BJ (cell line): ENCODE measurements at regions of chr15 and their contacts with region 1.

Region 1: DNA sequence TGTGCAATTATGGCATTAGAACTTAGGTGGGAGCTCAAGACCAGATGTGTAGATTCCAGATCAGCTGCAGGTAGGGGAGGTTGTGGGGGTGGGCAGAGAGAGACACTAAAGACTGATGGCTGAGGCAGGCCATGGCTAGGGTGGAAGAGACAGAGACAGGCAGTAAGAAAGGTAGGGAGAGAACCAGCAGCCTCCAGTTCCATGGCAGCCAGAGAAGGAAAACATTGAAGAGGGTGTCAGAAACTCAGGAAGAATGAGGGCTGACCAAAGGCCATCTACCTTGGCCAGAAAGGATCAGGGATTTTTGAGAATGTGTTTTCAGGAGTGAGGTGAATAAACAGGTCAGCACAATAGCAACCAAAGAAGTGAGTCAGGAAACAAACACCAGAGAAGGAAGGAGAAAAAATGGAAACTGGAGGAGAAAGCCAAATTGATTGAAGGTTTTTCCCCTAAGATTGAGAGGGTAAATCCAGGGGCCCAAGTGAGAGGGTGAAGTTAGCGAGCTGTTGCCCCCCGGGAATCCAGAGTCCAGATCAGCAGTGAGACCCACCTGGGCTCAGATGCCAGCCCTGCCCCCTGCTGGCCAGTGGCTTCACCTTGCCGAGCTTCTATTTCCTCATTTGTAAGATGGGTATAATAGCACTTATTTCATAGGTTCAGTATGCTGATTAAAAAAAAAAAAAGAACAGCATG is 41.0 kb downstream of the ABHD2 start:
- DNase-seq: no peak
- H3K4me3 ChIP-seq: no peak overlapping the region
- H3K27me3 ChIP-seq: no peaks in the 10 kb centered on the region
- CTCF ChIP-seq: peak; percentile 75

Region 2: GRCh38 chr15:89112341-89112971 is 16.8 kb before region 1 on chr15:
- CTCF ChIA-PET with region 1: interaction called, 37 read pairs
- POLR2A ChIA-PET with region 1: no interaction called
- DNase-seq: no peak
- H3K4me3 ChIP-seq: no peak overlapping the region
- H3K27me3 ChIP-seq: no peaks in the 10 kb centered on the region
- CTCF ChIP-seq: no peak

Region 3: DNA sequence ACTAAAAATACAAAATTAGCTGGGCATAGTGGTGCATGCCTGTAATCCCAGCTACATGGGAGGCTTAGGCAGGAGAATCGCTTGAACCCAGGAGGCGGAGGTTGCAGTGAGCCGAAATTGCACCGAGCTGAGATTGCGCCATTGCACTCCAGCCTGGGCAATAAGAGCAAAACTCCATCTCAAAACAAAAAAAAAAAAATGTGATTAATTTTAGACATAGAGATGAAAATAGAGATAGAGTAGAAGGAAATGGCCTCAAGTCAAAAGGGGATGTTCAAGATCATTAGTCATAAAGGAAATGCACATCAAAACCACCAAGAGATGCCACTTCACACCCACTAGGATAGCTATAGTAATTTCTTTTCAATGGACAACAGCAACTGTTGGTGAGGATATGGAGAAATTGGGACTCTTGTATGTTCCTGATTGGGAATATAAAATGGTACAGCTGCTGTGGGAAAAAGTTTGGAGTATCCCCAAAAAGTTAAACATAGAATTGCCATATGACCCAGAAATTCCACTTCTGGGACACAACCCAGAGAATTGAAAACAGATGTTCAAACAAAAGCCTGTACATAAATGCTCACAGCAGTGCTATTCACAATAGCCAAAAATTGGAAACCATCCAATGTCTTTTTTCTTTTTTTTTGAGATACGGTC is 14.4 kb after region 1 on chr15:
- CTCF ChIA-PET with region 1: interaction called, 16 read pairs
- POLR2A ChIA-PET with region 1: interaction called, 4 read pairs
- DNase-seq: peak; percentile 76
- H3K4me3 ChIP-seq: no peak overlapping the region
- H3K27me3 ChIP-seq: no peaks in the 10 kb centered on the region
- CTCF ChIP-seq: no peak

Region 4: DNA sequence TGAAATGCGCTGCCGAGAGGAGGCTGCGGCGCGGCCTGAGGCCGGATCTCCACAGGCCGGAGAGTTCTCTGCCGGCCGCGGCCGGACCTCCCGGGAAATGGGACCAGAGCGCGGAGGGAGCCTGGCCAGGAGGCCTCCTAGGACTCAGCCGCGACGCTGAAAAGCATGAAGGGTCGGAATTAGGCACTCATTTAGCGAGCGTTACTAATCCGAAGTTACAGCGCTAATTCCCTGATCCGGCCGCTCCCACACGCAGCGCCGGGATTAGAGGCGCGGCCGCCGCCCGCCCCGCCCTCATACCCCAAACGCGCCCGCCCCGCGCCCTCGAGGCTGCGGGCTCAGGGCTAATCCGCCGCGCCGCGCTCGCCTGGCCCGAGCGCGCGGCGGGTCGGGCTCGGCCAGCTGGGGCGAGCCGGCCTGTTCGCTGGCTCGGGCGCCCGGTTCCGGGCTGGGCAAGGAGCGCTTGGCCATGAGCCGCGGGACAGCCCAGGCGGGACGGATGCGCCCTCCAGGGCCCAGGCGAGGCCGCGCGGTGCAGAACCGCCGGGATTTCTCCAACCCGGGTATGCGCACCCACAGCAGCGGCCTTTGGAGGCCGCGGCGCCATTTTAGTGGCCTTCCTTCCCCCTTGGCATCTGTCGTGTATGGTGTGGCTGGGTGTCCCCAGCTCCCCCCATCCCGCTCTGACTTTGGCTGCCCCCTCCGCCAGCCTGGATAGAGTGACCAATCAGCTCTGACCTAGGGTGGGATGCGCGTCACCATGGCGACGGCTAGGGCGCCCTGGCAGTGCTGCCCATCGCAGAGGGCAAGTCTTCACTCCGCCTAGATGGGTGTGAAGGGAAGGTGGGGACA is 242.2 kb after region 1 on chr15:
- CTCF ChIA-PET with region 1: no interaction called
- POLR2A ChIA-PET with region 1: no interaction called
- DNase-seq: no peak
- H3K4me3 ChIP-seq: no peak overlapping the region
- H3K27me3 ChIP-seq: peaks cover 84% of the 10 kb centered on the region
- CTCF ChIP-seq: no peak